Right cardiac atrium (tissue), 5 donors: ENCODE measurements at regions of chr1 and their contacts with region 1.

Region 1: DNA sequence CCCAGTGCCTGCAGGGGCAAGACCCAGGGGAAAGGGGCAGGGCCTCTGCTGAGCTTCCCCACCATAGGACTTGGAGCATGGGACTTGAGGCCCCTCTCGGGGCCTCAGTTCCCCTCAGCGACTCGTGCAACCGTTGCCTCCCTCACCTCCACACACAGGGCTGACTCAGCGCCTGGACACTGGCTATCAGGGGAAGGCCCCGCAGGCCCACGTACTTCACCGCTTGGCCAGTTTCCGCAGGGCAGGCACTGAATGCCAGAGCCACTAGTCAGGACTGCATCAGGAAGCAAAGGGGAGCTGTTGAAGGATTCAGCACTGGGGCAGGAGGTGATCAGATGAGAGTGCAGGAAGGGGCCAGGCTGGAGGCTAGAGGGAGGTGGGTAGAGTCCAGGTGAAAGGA is 15.5 kb upstream of the FAM131C start:
- DNase-seq: no peak
- ATAC-seq: peak in 1 of 2 donors; percentile 19
- H3K4me3 ChIP-seq: no peak overlapping the region
- H3K27ac ChIP-seq: no peak overlapping the region
- H3K4me1 ChIP-seq: no peaks in the 10 kb centered on the region
- H3K27me3 ChIP-seq: no peaks in the 10 kb centered on the region

Region 2: DNA sequence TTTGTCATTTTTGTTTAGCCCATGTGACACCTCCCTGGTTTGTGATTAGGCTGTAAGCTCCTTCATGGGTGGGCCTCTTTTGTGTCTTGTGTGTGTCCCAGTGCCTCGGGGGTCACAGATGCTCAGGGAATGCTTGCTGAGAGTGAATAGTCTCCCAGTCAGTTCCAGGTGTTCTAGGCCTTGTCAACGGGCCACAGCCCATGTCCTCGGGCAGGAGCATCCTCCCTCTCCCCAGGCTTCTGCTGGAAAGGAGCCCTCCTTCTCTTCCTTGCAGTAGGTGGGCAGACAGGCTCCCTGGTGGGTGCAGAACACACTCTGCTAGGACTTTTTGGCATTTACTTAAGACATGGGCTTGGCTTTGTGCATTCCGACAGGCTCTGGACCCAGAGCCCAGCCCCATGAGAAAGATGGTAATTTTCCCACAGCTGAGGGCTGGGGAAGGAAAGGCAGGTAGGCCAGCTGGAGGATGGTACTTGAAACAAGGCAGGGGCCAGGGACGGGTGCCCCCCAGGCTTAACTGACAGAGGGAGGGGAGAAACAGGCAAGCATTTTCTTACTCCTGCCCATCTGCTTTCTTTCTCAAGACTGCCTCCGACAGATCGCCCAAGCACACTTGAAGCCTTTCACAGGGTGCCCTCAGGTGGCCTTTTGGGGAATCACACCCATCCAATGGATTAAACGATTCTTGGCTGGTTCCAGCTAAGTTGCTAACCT is 155.1 kb after region 1 on chr1:
- intact Hi-C with region 1: loop called in 1 of 4 experiments (anchors 5 kb)
- DNase-seq: peak; percentile 75 to 91 (median 81)
- ATAC-seq: peak; percentile 5 to 39
- H3K4me3 ChIP-seq: no peak overlapping the region
- H3K27ac ChIP-seq: no peak overlapping the region
- H3K4me1 ChIP-seq: peaks cover 19% of the 10 kb centered on the region
- H3K27me3 ChIP-seq: no peaks in the 10 kb centered on the region